Left cardiac atrium (tissue), 4 donors: ENCODE measurements at regions of chr5 and their contacts with region 1.

Region 1: DNA sequence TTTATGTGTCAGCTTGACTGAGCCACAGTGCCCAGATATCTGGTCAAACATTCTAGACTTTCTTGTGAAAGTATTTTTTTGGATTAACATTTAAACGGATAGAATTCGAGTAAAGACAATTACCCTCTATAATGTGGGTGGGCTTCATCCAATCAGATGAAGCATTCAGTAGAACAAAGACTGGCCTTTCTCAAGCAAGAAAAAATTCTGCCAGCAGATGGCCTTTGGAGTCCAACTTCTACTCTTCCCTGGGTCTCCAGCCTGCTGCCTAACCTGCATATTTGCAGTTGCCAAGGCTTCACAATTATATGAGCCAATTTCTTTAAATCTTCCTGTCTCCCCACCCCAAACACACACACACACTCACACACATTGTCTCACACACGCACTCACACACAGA is 86.4 kb downstream of the MED10 start:
- DNase-seq: no peak
- ATAC-seq: no peak

Region 2: GRCh38 chr5:6525910-6526309 is 233.9 kb after region 1 on chr5:
- intact Hi-C with region 1: loop called in 1 of 2 experiments (anchors 5 kb)
- DNase-seq: no peak
- ATAC-seq: peak; percentile 53 to 60

Region 3: DNA sequence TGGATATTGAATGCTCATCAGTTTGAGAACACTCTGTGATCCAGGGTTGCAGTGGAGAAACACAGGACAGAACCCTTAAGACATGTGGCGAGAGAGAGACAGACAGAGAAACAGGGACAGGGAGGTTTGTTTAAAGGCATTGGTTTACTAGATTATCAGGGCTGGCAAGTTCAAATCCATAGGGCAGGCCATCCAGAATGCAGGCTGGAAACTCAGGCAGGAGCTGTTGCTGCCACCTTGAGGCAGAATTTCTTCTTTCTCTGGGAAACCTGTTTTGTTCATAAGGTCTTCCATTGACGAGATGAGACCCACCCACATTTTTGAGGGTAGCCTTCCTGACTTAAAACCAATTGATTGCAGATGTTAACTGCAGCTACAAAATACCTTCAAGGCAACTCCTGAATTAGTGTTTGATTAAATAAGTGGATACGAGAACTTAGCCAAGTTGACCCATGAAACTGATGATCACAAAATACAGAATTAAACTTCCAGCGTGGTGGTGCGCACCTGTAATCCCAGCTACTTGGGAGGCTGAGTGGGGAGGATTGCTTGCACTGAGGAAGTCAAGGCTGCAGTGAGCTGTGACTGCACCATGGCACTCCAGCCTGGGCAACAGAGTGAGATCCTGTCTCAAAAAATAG is 285.0 kb after region 1 on chr5:
- intact Hi-C with region 1: loop called in 1 of 2 experiments (anchors 5 kb)
- DNase-seq: no peak
- ATAC-seq: peak; percentile 31 to 51